Breast epithelium (tissue), 4 donors: ENCODE measurements at regions of chr2 and their contacts with region 1.

Region 1: DNA sequence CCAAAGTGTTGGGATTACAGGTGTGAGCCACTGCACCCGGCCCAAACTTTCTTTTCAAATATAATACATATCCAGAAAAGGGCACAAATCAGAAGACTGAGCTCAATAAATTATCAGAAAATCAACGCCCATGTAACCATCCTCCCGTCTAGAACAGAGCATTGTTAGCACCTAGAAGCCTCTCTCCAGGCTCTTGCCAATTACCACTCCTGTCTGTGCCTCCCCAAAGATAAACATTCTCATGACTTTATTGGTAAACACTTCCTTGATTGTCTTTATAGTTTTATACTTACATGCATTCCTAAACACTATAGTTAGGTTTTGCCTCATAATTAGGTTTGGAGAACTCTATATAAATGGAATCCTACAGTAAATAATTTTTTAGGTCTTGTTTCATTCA is 58.5 kb upstream of the SP5 start:
- DNase-seq: no peak
- H3K4me3 ChIP-seq: no peak overlapping the region
- H3K27ac ChIP-seq: no peak overlapping the region
- H3K4me1 ChIP-seq: no peaks in the 10 kb centered on the region
- H3K27me3 ChIP-seq: no peaks in the 10 kb centered on the region
- CTCF ChIP-seq: no peak
- POLR2A ChIP-seq: no peak

Region 2: DNA sequence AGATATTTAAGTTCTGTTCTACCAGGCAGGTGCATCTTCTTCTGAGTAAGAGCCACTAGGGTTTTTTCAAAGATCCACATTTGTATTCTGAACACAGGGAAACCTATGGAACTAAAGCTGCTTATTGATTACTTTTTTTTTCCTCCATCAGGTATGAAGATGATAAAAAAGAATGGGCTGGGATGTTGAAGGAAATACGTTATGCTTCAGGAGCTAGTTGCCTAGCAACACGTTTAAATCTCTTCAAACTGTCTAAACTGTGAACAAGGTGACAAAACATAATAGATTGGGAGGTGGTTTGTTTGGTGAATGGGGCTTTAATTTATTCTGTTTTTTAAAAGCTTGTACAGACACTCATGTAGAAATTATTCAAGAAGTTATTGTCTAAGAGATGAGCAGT is 1131.2 kb before region 1 on chr2:
- intact Hi-C with region 1: no loop called
- DNase-seq: no peak
- H3K4me3 ChIP-seq: no peak overlapping the region
- H3K27ac ChIP-seq: no peak overlapping the region
- H3K4me1 ChIP-seq: no peaks in the 10 kb centered on the region
- H3K27me3 ChIP-seq: no peaks in the 10 kb centered on the region
- CTCF ChIP-seq: no peak
- POLR2A ChIP-seq: no peak

Region 3: GRCh38 chr2:171036532-171036931 is 379.9 kb after region 1 on chr2:
- intact Hi-C with region 1: loop called (anchors 5 kb)
- DNase-seq: no peak
- H3K4me3 ChIP-seq: no peak overlapping the region
- H3K27ac ChIP-seq: no peak overlapping the region
- H3K4me1 ChIP-seq: no peaks in the 10 kb centered on the region
- H3K27me3 ChIP-seq: no peaks in the 10 kb centered on the region
- CTCF ChIP-seq: no peak
- POLR2A ChIP-seq: no peak